Posterior vena cava (tissue), 2 donors: ENCODE measurements at regions of chr19 and their contacts with region 1.

Region 1: DNA sequence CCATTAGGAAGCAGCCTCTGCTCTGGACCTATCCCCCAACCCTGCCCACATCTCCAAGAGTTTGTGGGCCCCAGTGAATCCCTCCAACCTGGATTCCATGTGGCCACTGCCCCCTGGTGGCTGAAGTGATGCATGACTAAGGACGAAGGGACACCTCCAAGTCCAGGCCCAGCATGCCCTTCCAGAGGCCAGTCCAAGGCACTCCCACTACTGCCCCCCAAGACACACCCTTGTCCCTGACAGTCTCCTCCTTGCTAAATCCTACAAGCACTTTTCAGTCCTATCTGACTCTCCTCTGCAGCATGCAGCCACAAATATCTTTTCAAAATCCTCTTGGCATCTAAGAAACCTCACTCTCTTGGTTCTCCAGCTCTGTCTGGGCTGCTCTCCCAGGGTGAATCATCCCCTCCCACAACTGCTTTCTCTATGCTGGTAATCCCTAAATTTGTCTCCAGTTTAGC is 33.0 kb downstream of the DEDD2 start:
- DNase-seq: peak; percentile 93

Region 2: GRCh38 chr19:42132851-42133528 is 51.4 kb before region 1 on chr19:
- intact Hi-C with region 1: loop called (anchors 5 kb)
- DNase-seq: peak; percentile 91

Region 3: GRCh38 chr19:42153672-42154433 is 30.6 kb before region 1 on chr19:
- intact Hi-C with region 1: loop called in 1 of 2 experiments (anchors 1 kb)
- DNase-seq: no peak

Region 4: DNA sequence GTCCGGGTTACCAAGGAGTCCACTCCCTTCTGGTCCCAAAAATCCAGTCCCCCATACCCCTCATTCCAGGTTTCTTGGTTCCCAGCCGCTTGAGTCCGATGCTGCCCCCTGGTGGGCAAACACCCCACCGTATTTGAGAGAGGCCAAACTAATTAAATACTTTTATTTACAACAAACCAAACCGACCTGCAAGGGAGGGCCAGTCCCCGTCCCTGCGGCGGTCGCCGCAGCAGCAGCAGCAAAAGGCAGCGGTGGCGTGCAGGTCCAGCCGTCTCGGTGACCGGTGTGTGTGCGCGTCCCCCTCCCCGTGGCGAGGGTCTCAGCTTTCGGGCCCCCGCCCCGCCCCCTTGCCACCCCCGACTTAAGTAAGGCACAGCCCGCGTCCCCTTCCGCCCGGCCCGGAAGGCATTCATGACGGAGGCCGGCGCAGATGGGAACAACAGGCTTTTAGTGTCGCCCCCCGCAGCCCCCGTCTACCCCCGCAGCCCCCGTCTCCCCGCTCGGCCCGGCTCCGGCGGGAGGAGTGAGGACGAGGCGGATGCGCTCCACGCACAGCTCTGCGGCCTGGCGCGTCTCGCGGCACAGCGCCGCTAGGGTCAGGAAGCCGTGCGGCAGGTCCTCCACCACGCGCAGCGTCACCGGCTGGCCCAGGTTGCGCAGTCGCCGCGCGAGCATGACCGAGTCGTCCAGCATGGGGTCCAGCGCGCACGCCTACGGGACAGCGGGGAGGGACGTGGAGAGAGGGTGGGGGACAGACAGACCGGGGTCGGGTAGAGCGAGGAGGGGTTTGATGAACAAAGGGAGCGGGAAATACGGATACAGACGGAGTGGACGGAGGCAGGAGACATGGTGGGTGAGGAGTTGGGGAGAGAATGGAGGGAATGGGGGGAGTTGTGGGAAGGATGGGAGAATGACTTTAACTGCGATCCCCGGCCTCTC is 217.2 kb after region 1 on chr19:
- intact Hi-C with region 1: no loop called
- DNase-seq: peak; percentile 92